K562 (cell line): ENCODE measurements at regions of chr11 and their contacts with region 1.

Region 1: DNA sequence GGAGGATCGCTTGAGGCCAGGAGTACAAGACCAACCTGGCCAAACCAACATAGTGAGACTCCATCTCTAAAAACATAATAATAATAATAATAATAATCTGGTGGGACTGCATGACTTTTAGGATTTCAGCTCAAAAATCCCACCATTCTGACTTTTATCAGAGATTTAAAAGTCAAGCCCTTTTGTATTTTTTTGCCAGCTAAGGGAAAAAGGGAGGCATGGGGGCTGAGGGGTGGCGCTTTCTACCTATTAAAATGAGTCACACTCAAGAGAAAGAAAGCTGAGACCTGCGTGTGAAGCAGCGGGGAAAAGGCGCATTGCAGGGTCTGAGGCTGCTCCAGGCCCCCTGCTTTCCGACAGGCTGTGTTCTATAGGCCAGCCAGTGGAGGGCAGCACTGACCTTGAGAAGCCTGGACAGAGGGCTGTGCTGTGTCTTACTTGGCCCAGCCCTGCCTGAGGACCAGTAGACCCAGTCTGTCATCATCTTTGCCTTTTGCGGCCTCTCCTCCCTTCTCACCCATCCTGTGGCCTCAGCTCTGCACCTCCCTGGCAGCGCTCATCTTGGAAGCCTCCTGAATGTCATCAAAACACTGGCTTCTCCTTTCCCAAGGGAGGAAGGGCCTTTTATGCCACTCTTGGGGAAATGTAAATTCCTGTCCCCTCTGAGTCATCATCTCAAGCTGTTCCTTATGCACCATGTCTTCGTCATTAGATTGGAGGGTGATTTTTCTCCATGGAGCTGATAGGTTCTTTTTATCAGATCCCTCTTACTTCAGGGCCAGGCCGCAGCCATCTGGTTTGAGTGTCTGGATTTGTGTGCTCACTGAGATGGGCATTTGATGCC is 12.7 kb upstream of the MAPK8IP1 start:
- DNase-seq: peak; percentile 76 to 81 (median 77)
- ATAC-seq: peak; percentile 100
- H3K4me3 ChIP-seq: no peak overlapping the region
- H3K27ac ChIP-seq: no peak overlapping the region
- H3K4me1 ChIP-seq: peaks cover 0 to 8% of the 10 kb centered on the region in 2 experiments; a peak in 3 of 5 replicates
- H3K27me3 ChIP-seq: no peaks in the 10 kb centered on the region
- CTCF ChIP-seq: peak; percentile 83 to 89 (median 86)
- EP300 ChIP-seq: no peak
- POLR2A ChIP-seq: no peak
- RAD21 ChIP-seq: peak; percentile 74 to 93

Region 2: DNA sequence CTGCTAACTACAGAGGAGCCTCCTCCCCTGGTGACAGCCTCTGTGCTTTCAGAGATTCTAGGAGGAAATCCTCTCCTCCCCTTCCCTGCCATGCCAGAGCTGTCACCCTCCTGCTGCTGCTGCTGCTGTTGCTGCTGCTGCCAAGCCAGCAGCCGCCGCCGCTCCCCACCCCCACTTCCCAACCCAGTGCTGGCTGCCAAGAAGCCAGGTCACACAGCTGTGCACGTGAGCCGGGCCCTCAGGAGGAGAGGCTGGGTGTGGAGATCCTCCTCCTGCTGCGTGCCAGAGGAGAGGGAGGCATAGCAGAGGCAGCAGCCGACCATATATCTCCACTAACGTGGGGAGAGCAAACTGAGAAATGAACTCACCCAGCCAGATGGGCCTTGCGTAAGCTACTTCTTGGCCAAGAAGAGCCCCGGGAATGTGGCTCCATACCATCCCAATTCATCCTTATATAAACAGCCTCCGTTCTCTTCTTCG is 13.0 kb before region 1 on chr11:
- CTCF ChIA-PET with region 1: no interaction called
- POLR2A ChIA-PET with region 1: interaction called, 21 read pairs
- in situ Hi-C with region 1: no loop called
- intact Hi-C with region 1: no loop called
- DNase-seq: no peak
- ATAC-seq: no peak
- H3K4me3 ChIP-seq: no peak overlapping the region
- H3K27ac ChIP-seq: no peak overlapping the region
- H3K4me1 ChIP-seq: peaks cover 0 to 4% of the 10 kb centered on the region in 2 experiments; a peak in 1 of 5 replicates
- H3K27me3 ChIP-seq: no peaks in the 10 kb centered on the region
- CTCF ChIP-seq: no peak
- EP300 ChIP-seq: no peak
- POLR2A ChIP-seq: no peak
- RAD21 ChIP-seq: no peak

Region 3: DNA sequence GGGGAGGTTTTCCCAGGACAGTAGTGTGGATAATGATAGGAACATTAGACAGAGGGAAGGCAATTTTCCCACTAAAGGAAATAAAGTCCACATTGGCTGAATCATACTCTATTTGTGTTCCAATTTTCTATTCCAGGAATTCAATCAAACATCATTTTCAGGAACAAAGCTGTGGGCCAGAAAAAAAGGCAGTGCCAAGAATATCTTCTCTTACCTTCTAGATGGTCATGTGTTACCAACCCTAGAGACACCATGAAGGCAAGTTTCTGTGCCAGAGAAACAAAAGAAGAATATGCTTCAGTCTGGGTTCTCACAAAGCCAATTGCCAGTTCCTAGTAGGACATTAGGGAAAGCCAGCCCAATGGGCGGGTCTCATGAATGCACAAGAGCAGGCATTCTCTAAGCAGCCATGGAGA is 77.3 kb after region 1 on chr11:
- CTCF ChIA-PET with region 1: no interaction called
- POLR2A ChIA-PET with region 1: no interaction called
- in situ Hi-C with region 1: no loop called
- intact Hi-C with region 1: loop called (anchors 10 kb)
- DNase-seq: no peak
- ATAC-seq: no peak
- H3K4me3 ChIP-seq: no peak overlapping the region
- H3K27ac ChIP-seq: no peak overlapping the region
- H3K4me1 ChIP-seq: peaks cover 0 to 8% of the 10 kb centered on the region in 2 experiments; a peak in 3 of 5 replicates
- H3K27me3 ChIP-seq: no peaks in the 10 kb centered on the region
- CTCF ChIP-seq: no peak
- EP300 ChIP-seq: no peak
- POLR2A ChIP-seq: no peak
- RAD21 ChIP-seq: no peak